ENCODE measurements at regions of chr7 and their contacts with region 1.

Region 1: DNA sequence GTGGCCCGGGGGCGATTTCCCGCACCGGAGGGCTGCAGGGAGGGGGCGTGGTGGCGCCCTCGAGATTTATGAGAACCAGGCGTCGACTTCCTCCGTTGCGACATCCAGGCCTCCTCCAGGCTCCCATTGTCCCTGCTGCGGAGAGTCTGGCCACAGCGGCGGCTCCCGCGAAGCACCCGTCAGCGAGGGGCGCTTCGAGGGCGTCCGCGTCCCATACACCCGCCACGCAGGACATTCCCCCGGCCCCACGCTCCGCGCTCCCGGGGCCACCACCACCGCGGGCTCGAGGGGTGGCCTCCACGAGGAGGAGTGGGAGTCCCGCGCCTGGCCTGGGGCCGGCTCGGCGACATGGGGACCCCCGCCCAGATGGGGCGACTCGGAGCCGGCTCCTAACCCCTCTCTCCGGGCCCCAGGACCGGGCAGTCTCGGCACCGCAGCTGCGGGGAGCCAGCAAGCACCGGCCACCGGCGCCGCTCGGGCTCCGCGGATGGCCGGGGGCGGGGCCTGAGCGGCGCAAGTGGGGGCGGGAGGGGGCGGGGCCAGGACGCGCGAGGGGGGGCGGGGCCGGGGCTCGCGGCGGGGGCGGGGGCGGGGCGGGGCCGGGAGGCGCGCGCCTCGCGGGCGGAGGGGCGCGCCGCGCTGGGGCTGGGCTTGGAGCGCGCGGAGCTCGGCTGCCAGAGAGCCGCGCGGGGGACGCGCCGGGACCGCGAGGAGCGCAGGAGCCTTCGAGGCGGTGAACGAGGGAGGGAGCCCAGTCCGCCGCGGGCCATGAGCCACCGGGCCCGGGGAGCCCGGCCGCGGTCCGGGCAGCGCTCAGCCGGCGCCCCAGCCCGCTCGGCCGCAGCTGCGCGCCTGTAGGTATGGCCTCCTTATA is at the start of gene SH2B2:
- DNase-seq: peak; percentile 26
- H3K4me3 Mint-ChIP-seq: peak within 1 kb of the TSS; percentile 64
- H3K27ac Mint-ChIP-seq: no peak within 1 kb of the TSS
- H3K4me1 Mint-ChIP-seq: peaks cover 8% of the 10 kb centered on the region
- H3K27me3 Mint-ChIP-seq: peaks cover 20% of the 10 kb centered on the region
- total RNA-seq, gene SH2B2: 1.8 and 1.9 TPM in 2 replicates

Region 2: DNA sequence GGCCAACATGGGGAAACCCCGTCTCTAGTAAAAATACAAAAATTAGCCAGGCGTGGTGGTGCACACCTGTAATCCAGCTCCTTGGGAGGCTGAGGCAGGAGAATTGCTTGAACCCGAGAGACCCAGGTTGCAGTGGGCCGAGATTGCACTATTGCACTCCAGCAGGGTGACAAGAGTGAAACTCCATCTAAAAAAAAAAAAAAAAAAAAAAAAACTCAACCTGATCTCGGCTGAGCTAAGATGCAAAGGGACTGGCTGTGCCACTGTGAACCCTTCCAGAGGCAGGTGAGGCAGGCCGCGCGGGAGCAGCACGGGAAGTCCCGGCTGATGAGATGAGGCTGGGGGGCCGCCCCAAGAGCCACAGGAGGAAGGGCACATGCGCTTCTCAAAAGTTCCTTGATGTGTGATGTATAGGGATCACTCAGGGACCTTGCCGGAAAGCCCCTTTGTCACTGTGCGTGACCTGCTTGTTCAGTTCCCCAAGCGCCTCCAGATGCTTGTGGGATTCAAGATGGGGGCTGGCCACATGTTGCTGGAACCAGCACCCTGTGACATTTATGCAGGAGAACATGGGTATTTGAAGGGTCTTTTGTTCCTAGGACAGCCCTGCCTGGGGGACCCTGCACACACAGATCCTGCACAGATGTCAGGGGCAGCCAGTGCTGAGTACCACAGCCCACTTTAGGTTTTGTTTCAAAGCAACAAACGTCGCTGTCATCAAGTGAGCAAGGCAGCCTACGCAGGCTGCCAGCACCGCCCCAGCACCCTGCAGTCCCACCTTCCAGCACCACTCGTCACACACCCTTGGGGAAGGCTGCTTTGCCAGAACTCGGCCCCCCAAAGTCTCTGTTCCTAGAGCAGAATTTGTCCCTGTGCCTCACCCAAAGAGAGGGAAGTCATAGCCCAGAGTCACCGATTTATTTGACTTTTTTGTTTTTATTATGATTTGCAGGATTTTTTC is 74.6 kb before region 1 on chr7:
- intact Hi-C with region 1: no loop called
- DNase-seq: no peak
- H3K4me3 Mint-ChIP-seq: no peak overlapping the region
- H3K27ac Mint-ChIP-seq: no peak overlapping the region
- H3K4me1 Mint-ChIP-seq: peaks cover 4% of the 10 kb centered on the region
- H3K27me3 Mint-ChIP-seq: no peaks in the 10 kb centered on the region

Region 3: DNA sequence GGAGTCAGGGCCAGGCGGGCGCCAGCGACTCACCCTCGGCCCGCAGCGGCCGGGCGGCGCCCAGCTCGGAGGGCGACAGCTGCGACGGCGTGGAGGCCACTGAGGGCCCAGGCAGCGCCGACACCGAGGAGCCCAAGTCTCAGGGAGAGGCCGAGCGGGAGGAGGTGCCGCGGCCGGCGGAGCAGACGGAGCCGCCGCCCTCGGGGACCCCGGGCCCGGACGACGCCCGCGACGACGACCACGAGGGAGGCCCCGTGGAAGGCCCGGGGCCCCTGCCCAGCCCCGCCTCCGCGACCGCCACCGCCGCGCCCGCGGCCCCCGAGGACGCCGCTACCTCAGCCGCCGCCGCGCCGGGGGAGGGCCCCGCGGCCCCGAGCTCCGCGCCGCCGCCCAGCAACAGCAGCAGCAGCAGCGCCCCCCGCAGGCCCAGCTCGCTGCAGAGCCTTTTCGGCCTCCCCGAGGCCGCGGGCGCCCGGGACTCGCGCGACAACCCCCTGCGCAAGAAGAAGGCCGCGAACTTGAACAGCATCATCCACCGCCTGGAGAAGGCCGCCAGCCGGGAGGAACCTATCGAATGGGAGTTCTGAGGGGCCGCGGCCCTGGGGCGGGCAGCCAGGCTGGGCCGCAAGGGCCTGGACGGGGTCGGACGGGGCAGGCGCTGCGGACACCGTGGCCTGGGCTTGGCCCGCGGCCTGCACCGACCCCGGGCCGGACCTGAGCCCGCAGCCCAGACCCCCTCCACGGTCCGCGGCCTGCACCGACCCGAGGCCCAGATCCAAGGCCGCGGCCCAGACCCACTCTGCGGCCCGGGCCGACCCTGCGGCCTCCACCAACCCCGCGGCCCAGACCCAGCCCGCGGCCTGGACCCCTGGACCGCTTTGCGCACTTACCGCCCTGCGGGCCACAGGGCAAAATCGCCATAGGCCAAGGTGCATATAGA is 37.7 kb before region 1 on chr7:
- intact Hi-C with region 1: no loop called
- DNase-seq: no peak
- H3K4me3 Mint-ChIP-seq: no peak overlapping the region
- H3K27ac Mint-ChIP-seq: no peak overlapping the region
- H3K4me1 Mint-ChIP-seq: peaks cover 5% of the 10 kb centered on the region
- H3K27me3 Mint-ChIP-seq: no peaks in the 10 kb centered on the region

Region 4: GRCh38 chr7:102396027-102397019 is 109.8 kb after region 1 on chr7 and contains the start of gene PRKRIP1:
- intact Hi-C with region 1: loop called (anchors 2 kb)
- DNase-seq: peak; percentile 80
- H3K4me3 Mint-ChIP-seq: peak within 1 kb of the TSS; percentile 92
- H3K27ac Mint-ChIP-seq: peak within 1 kb of the TSS; percentile 82
- H3K4me1 Mint-ChIP-seq: peaks cover 14% of the 10 kb centered on the region
- H3K27me3 Mint-ChIP-seq: no peaks in the 10 kb centered on the region
- total RNA-seq, gene PRKRIP1: 25.7 and 30.0 TPM in 2 replicates